AG04450 (cell line): ENCODE measurements at regions of chr3 and their contacts with region 1.

Region 1: DNA sequence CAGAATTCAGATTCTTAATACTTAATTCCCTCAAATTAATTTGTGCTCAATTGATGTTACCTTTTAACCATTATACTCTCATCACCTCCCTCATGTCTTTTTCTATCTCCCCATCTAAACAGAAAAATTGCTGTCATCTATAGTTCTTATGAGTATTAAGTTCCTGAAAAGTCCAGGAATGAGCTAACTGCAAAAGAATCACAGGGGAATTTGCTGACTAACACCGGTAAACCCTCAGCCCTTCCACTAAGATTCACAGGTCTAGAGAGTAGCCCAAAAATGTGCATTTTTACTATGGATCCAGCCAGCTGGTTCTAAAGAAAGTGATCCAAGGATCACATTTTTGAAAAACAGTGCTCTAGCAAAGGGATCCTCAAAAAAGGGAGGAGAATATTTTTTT is 67.0 kb downstream of the SETD2 start:
- DNase-seq: no peak
- H3K4me3 ChIP-seq: no peak overlapping the region
- H3K27ac ChIP-seq: peak overlapping the region; percentile 54
- H3K27me3 ChIP-seq: no peaks in the 10 kb centered on the region
- CTCF ChIP-seq: no peak

Region 2: DNA sequence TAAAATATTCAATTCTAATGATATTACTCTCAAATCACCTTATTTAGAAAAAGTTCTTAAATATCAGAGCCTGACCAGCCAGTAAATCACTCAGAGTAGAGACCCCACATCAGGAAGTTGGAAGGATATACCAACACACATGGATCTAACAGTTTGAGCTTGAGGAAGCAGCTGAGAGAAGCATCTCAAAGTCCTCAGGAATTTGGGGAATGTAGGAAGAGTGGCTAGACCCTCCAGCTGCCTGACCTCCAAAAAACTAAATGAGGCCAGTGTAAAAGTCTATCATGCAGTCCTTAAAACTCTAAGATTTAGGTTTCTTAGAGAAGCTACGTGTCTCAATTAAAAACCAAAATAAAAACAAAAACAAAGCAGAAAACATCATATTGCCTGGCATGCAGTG is 11.6 kb after region 1 on chr3:
- CTCF ChIA-PET with region 1: no interaction called
- POLR2A ChIA-PET with region 1: interaction called, 19 read pairs
- DNase-seq: peak; percentile 15
- H3K4me3 ChIP-seq: no peak overlapping the region
- H3K27ac ChIP-seq: no peak overlapping the region
- H3K27me3 ChIP-seq: no peaks in the 10 kb centered on the region
- CTCF ChIP-seq: no peak